Activated T-helper 1 cell treated with anti-CD3 and anti-CD28 coated beads, Interleukin-12 subunit alpha, Interleukin-12 subunit beta, Interleukin-2, Interleukin-4 antibody, amounts not matched to agents 30 ng/mL and 10 ng/mL and 1 ng/mL, durations not matched to agents 14 hours and 24 hours and 36 hours (primary cell): ENCODE measurements at regions of chr6 and their contacts with region 1.

Region 1: DNA sequence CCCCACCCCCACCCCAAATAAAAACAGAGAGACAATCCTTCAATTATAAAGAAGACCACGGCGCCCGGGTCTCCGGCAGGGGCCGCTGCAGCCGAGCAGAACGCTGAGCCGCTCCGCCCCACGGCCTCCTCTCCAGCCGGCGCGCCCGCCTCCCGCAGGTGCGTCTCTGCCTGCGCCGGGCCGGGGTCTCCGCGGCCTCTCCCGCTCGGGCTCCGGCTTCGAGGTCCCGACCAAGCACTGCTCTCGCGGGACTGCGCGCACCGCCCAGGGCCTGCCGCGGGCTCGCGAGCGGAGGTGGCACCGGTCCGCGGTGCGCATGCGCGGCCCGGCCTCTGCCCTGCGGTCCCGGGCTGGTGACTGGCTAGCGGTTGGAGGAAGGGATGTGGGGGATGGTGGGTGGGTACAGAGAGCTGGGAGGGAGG is 241 bp upstream of the SIRT5 start:
- DNase-seq: peak; percentile 90
- H3K4me3 Mint-ChIP-seq: peak overlapping the region; percentile 92
- H3K27ac Mint-ChIP-seq: peak overlapping the region; percentile 99
- H3K4me1 Mint-ChIP-seq: peaks cover 19% of the 10 kb centered on the region
- H3K27me3 Mint-ChIP-seq: peaks cover 9% of the 10 kb centered on the region

Region 2: GRCh38 chr6:13328076-13328874 is 245.9 kb before region 1 on chr6 and contains the start of gene TBC1D7:
- intact Hi-C with region 1: loop called (anchors 1 kb)
- DNase-seq: peak; percentile 93
- H3K4me3 Mint-ChIP-seq: peak within 1 kb of the TSS; percentile 84
- H3K27ac Mint-ChIP-seq: peak within 1 kb of the TSS; percentile 92
- H3K4me1 Mint-ChIP-seq: peaks cover 38% of the 10 kb centered on the region
- H3K27me3 Mint-ChIP-seq: peaks cover 2% of the 10 kb centered on the region
- total RNA-seq, gene TBC1D7: 27.3 and 28.2 TPM in 2 replicates

Region 3: DNA sequence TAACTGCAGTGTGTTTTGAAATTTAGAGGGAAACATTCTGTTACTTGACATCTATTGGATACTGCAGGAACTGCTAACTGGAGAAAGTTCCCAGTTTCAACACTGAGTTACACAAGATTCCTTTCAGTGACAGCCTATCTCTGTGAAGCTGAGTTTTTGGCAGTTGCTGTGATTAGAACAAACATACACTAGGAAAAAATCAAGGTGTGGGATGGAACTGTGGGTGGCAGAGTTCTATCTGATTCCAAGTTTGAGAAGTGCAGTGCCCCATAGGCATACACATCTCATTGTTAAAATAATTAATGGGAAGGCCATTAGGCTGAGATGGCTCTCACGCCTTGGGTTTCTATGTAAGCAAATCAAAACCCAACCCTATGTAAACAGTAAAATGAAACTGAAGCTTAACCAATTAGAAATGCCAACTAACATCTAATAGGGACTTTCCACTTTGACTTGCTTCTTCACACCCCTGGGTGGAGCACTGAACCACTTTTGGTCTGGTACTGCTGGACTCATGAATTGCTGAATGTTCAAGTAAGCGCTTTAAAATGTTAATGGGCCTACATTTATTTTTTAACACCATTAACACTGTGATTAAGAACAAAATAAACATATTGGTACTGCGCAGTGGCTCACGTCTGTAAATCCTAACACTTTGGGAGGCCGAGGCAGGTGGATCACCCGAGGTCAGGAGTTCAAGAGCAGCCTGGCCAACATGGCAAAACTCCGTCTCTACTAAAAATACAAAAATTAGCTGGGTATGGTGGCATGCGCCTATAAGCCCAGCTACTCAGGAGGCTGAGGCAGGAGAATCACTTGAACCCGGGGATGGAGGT is 190.6 kb before region 1 on chr6:
- intact Hi-C with region 1: loop called (anchors 1 kb)
- DNase-seq: peak; percentile 17
- H3K4me3 Mint-ChIP-seq: no peak overlapping the region
- H3K27ac Mint-ChIP-seq: peak overlapping the region; percentile 18
- H3K4me1 Mint-ChIP-seq: peaks cover 38% of the 10 kb centered on the region
- H3K27me3 Mint-ChIP-seq: no peaks in the 10 kb centered on the region

Region 4: GRCh38 chr6:13466304-13467215 is 107.6 kb before region 1 on chr6:
- intact Hi-C with region 1: no loop called
- DNase-seq: no peak
- H3K4me3 Mint-ChIP-seq: no peak overlapping the region
- H3K27ac Mint-ChIP-seq: peak overlapping the region; percentile 85
- H3K4me1 Mint-ChIP-seq: peaks cover 46% of the 10 kb centered on the region
- H3K27me3 Mint-ChIP-seq: no peaks in the 10 kb centered on the region

Region 5: GRCh38 chr6:13487122-13488014 is 86.8 kb before region 1 on chr6 and contains the start of gene GFOD1:
- intact Hi-C with region 1: loop called (anchors 1 kb)
- DNase-seq: peak; percentile 80
- H3K4me3 Mint-ChIP-seq: peak within 1 kb of the TSS; percentile 89
- H3K27ac Mint-ChIP-seq: peak within 1 kb of the TSS; percentile 72
- H3K4me1 Mint-ChIP-seq: peaks cover 39% of the 10 kb centered on the region
- H3K27me3 Mint-ChIP-seq: peaks cover 10% of the 10 kb centered on the region
- total RNA-seq, gene GFOD1: 12.4 and 13.6 TPM in 2 replicates

Region 6: DNA sequence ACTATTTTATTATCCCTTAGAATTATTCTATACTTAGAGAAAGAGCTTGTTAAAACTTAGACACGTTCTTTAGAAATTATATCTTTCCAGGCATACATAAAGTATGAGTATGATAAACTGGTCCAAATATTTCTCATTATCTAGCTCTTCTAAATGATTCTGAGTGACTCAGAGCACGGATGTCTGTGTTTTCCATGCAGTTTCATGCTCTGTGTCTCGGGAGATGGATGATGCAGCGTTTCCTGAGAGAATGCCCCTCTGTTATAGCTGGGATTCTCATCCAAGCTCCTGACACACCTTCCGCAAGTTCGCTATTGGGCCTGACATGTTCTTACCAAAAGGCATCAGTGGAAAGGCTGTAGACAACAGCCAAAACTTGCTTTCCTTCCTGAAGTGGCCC is 19.6 kb after region 1 on chr6:
- intact Hi-C with region 1: no loop called
- DNase-seq: no peak
- H3K4me3 Mint-ChIP-seq: no peak overlapping the region
- H3K27ac Mint-ChIP-seq: no peak overlapping the region
- H3K4me1 Mint-ChIP-seq: peaks cover 6% of the 10 kb centered on the region
- H3K27me3 Mint-ChIP-seq: no peaks in the 10 kb centered on the region

Region 7: GRCh38 chr6:13762611-13763441 is 188.7 kb after region 1 on chr6:
- intact Hi-C with region 1: loop called (anchors 1 kb)
- DNase-seq: peak; percentile 34
- H3K4me3 Mint-ChIP-seq: peak overlapping the region; percentile 75
- H3K27ac Mint-ChIP-seq: peak overlapping the region; percentile 92
- H3K4me1 Mint-ChIP-seq: peaks cover 52% of the 10 kb centered on the region
- H3K27me3 Mint-ChIP-seq: peaks cover 2% of the 10 kb centered on the region

Region 8: GRCh38 chr6:14066782-14067406 is 492.7 kb after region 1 on chr6:
- intact Hi-C with region 1: loop called (anchors 2 kb)
- DNase-seq: no peak
- H3K4me3 Mint-ChIP-seq: peak overlapping the region; percentile 32
- H3K27ac Mint-ChIP-seq: peak overlapping the region; percentile 21
- H3K4me1 Mint-ChIP-seq: peaks cover 35% of the 10 kb centered on the region
- H3K27me3 Mint-ChIP-seq: peaks cover 11% of the 10 kb centered on the region